ENCODE measurements at regions of chr10 and their contacts with region 1.

Region 1: GRCh38 chr10:14812271-14812670 is 25.6 kb downstream of the CDNF start:
- DNase-seq: no peak
- CTCF ChIP-seq: no peak

Region 2: DNA sequence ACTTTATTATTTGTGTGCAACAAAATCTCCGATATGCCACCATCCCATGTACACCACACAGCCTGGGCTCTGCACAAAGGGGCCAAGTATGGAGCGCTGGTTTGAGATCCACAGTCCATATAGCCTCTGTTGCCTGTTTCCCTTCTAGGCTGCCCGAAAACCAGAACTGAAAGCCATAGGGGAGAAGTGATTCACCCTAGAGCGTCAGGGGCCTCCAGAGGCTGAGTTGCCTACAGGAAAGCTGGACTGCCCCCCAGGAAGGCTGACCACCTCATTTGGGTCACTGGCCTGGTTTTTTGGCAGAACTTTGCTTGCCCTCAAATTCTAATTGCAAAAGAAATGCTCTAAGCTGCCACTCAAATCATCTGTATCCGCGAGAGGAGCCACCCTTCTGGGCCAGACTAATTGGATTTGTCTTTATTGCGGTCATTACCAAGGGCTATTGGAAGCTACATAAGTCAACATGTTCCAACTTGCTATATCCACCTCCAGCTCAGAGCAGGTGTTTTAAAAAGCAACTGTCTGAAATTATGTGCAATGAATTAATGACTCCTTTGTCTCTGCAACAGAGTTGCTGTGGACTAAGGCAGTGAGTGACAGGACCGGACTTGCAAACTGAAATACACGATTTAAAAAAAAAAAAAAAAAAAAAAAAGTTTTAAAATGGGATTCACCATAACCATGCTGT is 453.2 kb before region 1 on chr10:
- CTCF ChIA-PET with region 1: no interaction called
- POLR2A ChIA-PET with region 1: no interaction called
- DNase-seq: no peak
- CTCF ChIP-seq: no peak

Region 3: DNA sequence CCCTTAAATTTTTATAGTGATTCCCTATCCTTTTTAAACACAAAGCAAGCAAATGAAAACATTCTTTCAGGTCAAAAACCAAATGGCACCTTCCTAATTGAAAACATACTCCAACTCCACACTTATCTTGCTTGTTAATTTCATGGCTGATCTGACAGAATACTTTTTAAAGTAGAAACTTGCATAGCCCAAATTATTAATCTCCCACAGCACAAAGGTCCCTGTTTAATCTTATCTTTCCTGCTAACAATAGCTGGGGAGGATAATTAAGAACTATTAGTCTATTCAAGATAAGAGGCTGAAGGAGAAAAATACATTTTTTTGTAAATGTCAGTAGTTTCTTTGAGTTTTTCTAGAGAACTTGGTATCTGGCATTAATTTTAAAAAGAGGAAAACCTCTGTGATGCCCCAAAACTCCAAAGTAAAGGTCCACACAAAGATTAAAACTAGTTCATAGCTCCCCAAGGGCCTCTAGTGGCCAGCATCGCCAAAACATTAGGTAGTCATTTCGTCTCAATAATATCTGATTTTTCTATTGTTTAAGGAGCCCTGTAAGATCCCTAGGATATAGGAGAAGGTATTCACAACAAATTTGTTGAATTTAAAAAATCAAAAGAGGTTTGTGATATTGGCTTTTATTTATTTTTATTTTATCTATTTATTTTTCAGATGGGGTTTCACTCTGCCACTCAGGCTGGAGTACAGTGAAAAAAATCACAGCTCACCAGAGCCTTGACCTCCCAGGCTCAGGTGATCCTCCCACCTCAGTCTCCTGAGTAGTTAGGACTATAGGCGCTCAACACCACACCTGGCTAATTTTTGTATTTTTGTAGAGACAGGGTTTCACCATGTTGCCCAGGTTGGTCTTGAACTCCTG is 10.8 kb after region 1 on chr10:
- CTCF ChIA-PET with region 1: interaction called, 17 read pairs
- POLR2A ChIA-PET with region 1: no interaction called
- DNase-seq: peak; percentile 58
- CTCF ChIP-seq: peak; percentile 77